Activated CD4-positive, alpha-beta T cell treated with anti-CD3 and anti-CD28 coated beads, Interleukin-2, amount 10 ng/mL, durations not matched to agents 24 days and 14 days (primary cell): ENCODE measurements at regions of chr9 and their contacts with region 1.

Region 1: GRCh38 chr9:132857616-132858342 is 20.3 kb downstream of the AK8 start:
- DNase-seq: no peak
- H3K4me3 Mint-ChIP-seq: no peak overlapping the region
- H3K27ac Mint-ChIP-seq: no peak overlapping the region
- H3K4me1 Mint-ChIP-seq: peaks cover 8% of the 10 kb centered on the region
- H3K27me3 Mint-ChIP-seq: peaks cover 2% of the 10 kb centered on the region

Region 2: DNA sequence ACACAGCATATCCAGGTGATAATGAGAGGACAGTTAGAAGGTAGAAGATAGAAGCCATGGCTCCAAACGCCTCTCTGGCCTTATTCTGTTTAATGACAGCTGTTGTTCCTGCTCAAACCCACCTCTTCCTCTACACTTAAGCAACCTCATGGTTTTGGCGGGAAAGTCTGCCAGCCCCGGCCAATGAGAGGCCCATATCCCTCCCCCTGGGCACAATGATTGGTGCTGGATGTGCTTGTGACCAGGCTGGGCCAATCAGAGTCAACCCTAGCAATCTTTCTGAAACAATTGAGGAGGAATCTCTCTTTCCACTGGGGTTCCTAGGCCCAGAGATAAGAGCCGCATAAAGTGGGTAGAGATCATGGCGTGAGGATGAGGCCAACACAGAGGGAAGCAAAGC is 115.9 kb after region 1 on chr9:
- intact Hi-C with region 1: loop called (anchors 10 kb)
- DNase-seq: peak; percentile 65
- H3K4me3 Mint-ChIP-seq: no peak overlapping the region
- H3K27ac Mint-ChIP-seq: no peak overlapping the region
- H3K4me1 Mint-ChIP-seq: no peaks in the 10 kb centered on the region
- H3K27me3 Mint-ChIP-seq: peaks cover 24% of the 10 kb centered on the region